ENCODE measurements at regions of chr2 and their contacts with region 1.

Region 1: GRCh38 chr2:189179570-189179950 is at the start of gene COL5A2:
- DNase-seq: no peak
- H3K4me3 ChIP-seq: peak within 1 kb of the TSS; percentile 54 to 70 (median 66)
- H3K27ac ChIP-seq: peak within 1 kb of the TSS; percentile 75 to 82 (median 79)
- H3K4me1 ChIP-seq: peaks cover 0 to 28% (median 20%) of the 10 kb centered on the region in 4 donors
- H3K27me3 ChIP-seq: no peaks in the 10 kb centered on the region
- CTCF ChIP-seq: no peak
- EP300 ChIP-seq: no peak
- POLR2A ChIP-seq: no peak
- total RNA-seq, gene COL5A2: 49.9 to 68.5 (median 59.0) TPM

Region 2: GRCh38 chr2:189109921-189110397 is 69.6 kb before region 1 on chr2:
- intact Hi-C with region 1: loop called (anchors 5 kb)
- DNase-seq: no peak
- H3K4me3 ChIP-seq: no peak overlapping the region
- H3K27ac ChIP-seq: no peak overlapping the region
- H3K4me1 ChIP-seq: peaks cover 0 to 16% (median 0%) of the 10 kb centered on the region in 4 donors
- H3K27me3 ChIP-seq: no peaks in the 10 kb centered on the region
- CTCF ChIP-seq: no peak
- EP300 ChIP-seq: no peak
- POLR2A ChIP-seq: no peak

Region 3: DNA sequence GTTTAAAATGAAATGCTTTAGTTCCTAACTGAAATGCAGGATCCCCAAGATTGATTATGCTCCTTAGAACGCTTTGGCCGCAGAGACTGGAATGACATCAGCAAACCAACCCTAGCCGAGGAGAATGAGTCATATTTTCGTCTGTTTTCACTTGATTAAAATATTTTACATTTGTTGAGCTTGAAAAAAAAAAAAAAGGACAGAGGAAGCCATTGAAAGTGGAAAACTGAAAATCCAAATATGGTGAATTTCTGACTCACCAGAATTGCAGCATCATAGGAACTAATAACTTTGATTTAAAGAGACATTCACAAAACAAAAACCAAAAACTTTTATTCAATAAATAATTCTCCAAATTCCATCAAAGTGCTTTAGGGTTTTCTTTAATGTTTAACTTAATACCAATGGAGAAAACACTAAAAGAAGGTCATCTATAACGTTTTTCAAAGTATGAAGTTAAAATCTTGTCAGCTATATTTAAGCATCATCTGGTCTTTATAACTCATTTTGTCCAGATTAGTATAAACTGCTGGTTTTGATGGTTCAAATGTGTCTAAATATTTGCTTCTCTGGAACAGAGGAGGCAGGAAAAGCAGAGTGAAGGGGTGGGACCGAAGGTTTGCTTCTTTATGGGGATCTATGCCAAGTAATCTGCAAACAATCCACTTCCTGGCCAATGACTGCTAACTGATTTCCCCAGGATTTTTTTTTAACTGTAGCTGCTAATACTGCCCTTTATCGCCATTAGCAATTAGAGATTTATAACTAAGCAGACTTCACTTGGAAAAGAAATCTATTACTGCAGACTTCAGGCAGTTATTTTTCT is 30.9 kb after region 1 on chr2:
- intact Hi-C with region 1: loop called (anchors 2 kb)
- DNase-seq: no peak
- H3K4me3 ChIP-seq: peak overlapping the region; percentile 30 to 43 (median 37)
- H3K27ac ChIP-seq: peak overlapping the region; percentile 76 to 85 (median 80)
- H3K4me1 ChIP-seq: peaks cover 6 to 27% (median 22%) of the 10 kb centered on the region in 4 donors
- H3K27me3 ChIP-seq: no peaks in the 10 kb centered on the region
- CTCF ChIP-seq: no peak
- EP300 ChIP-seq: no peak
- POLR2A ChIP-seq: no peak